Activated CD4-positive, alpha-beta T cell treated with anti-CD3 and anti-CD28 coated beads for 36 hours (primary cell): ENCODE measurements at regions of chr13 and their contacts with region 1.

Region 1: DNA sequence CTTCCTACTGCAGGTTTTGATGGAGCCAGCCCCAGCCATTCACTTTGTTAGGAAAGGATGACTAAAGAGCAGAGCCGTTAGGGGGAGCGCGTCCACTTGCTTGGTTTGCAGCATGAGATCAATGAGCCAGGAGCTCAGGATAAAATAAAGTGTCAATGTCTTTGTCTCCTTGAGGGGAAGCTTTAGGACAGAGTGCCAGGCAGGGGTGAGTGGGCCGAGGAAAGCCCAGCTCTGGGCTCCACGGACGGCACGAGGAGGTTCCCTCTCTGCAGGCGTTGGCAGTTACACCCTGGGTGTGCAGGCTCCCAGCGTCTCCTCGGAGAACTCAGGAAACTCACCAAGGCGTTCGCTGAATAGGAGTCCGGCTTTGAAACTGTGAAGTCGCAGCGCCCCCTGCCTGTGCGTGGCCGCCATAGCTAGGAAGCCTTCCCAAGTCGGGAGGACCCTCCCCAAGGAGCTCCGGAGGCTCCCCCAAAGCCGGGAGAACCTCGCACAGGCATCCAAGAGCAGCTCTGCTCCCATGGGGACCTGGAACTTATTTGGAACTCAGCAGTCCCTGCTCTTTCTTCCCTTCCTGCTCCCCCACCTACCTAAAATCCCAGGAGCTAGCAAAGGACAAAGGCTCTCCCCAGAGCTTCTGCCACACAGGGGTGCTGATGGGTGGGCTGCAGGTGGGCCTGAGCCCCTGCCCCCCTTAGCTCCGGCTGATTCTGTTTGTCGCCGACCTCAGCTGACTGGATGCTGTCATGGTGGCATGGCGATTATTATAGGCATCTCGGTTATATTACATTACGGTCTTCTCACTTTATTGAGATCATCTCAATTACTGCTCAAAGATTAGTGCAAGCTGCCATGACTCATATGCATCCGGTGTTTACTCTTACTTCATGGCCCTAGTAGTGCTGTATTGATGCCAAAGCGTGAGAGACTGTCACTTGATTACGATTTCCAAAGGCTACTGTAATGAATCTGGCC is 34.4 kb downstream of the GSX1 start:
- DNase-seq: peak; percentile 82
- ATAC-seq: peak; percentile 84
- H3K4me3 Mint-ChIP-seq: no peak overlapping the region
- H3K27ac Mint-ChIP-seq: no peak overlapping the region
- H3K4me1 Mint-ChIP-seq: peaks cover 7% of the 10 kb centered on the region
- H3K27me3 Mint-ChIP-seq: peaks cover 51% of the 10 kb centered on the region

Region 2: GRCh38 chr13:26985285-26985878 is 841.3 kb before region 1 on chr13:
- CTCF ChIA-PET with region 1: interaction called, 6 read pairs
- POLR2A ChIA-PET with region 1: no interaction called
- intact Hi-C with region 1: loop called in 1 of 2 experiments (anchors 5 kb)
- DNase-seq: peak; percentile 84
- ATAC-seq: peak; percentile 92
- H3K4me3 Mint-ChIP-seq: no peak overlapping the region
- H3K27ac Mint-ChIP-seq: no peak overlapping the region
- H3K4me1 Mint-ChIP-seq: no peaks in the 10 kb centered on the region
- H3K27me3 Mint-ChIP-seq: peaks cover 12% of the 10 kb centered on the region

Region 3: DNA sequence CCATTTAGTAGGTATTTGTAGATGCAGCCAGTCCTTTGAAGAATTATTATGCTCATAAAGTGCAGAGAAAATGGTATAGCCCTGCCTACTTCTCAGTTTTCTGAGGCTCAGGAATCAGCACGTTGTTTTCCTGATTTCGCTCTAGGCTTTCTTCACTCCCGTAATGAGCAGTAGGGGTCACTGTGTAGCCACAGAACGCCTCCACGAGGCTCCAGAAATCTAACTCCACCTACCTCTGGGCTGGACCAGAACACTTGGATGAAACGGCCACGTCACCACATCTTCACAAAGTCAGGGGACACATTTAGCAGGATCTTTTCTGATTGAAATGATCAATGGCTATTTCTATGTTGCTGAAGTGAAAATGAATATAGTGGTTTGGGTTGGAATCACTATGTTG is 452.0 kb before region 1 on chr13:
- CTCF ChIA-PET with region 1: interaction called, 74 read pairs
- POLR2A ChIA-PET with region 1: no interaction called
- intact Hi-C with region 1: loop called (anchors 1 kb)
- DNase-seq: peak; percentile 72
- ATAC-seq: peak; percentile 95
- H3K4me3 Mint-ChIP-seq: no peak overlapping the region
- H3K27ac Mint-ChIP-seq: no peak overlapping the region
- H3K4me1 Mint-ChIP-seq: peaks cover 3% of the 10 kb centered on the region
- H3K27me3 Mint-ChIP-seq: peaks cover 15% of the 10 kb centered on the region

Region 4: DNA sequence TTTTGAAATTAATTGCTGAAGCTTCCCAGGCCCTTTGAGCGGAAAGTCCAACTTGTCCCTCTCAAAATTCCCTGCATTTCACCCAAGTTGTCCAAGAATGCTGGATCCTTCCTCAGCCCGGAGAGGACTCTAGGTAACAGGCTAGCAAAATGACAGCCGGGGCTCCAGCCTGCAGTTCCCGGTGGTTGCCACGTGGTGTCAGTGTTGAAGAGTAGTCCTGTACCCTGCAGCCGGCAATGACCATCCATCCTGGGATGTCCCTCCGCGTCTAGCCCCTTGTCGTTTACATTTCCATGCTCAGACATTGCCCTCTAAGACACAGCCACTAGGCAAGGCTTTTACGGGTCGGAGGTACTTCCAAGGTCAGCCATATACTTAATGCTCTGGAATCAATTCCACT is 344.9 kb before region 1 on chr13:
- CTCF ChIA-PET with region 1: interaction called, 3 read pairs
- POLR2A ChIA-PET with region 1: no interaction called
- intact Hi-C with region 1: loop called (anchors 2 to 5 kb)
- DNase-seq: peak; percentile 68
- ATAC-seq: peak; percentile 47
- H3K4me3 Mint-ChIP-seq: no peak overlapping the region
- H3K27ac Mint-ChIP-seq: no peak overlapping the region
- H3K4me1 Mint-ChIP-seq: peaks cover 17% of the 10 kb centered on the region
- H3K27me3 Mint-ChIP-seq: no peaks in the 10 kb centered on the region

Region 5: GRCh38 chr13:27770809-27771208 is 55.9 kb before region 1 on chr13:
- CTCF ChIA-PET with region 1: interaction called, 50 read pairs
- POLR2A ChIA-PET with region 1: interaction called, 3 read pairs
- intact Hi-C with region 1: loop called (anchors 1 kb)
- DNase-seq: peak; percentile 59
- ATAC-seq: no peak
- H3K4me3 Mint-ChIP-seq: no peak overlapping the region
- H3K27ac Mint-ChIP-seq: no peak overlapping the region
- H3K4me1 Mint-ChIP-seq: no peaks in the 10 kb centered on the region
- H3K27me3 Mint-ChIP-seq: peaks cover 11% of the 10 kb centered on the region

Region 6: GRCh38 chr13:27839809-27840467 is 13.3 kb after region 1 on chr13:
- CTCF ChIA-PET with region 1: interaction called, 42 read pairs
- POLR2A ChIA-PET with region 1: no interaction called
- intact Hi-C with region 1: no loop called
- DNase-seq: no peak
- ATAC-seq: no peak
- H3K4me3 Mint-ChIP-seq: no peak overlapping the region
- H3K27ac Mint-ChIP-seq: no peak overlapping the region
- H3K4me1 Mint-ChIP-seq: no peaks in the 10 kb centered on the region
- H3K27me3 Mint-ChIP-seq: peaks cover 28% of the 10 kb centered on the region

Region 7: DNA sequence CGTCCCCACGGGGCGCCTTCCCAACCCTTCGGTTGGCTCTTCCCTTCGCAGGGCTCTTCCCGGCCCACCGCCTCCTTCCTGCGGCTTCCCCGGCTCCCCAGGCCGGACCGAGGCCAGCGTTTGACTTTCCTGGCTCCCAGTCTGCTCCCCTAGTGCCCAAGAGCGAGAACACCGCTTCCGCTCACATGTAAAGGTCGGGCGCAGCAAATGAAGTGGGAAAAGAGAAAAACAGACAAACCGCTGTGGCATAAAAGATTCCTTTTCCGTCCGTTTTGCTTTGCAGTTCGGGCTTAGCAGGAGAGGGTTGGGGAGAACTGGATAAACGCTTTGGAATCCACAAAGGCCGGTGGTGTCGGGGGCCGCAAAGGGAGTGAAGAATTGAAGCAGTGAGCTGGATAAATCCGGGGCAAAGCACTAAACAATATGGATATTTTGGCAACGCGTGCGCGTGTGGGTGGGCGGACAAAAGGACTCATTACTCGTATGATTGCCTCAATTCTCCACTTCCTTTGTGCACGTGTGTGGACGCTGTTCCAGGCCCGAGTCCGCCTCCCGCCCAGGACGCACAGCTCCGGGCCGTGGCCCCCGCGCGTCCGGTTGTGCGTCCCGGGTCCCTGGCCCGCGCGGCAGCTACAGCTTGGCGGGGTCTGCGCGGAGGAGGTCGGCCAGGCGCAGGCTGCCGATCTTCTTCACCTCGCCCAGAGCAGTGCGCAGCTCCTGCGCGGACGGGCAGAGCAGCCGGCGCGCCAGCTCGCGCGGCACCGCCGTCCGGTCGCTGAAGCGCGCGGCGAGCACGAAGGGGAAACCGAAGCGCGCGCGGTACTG is 151.0 kb after region 1 on chr13:
- CTCF ChIA-PET with region 1: interaction called, 126 read pairs
- POLR2A ChIA-PET with region 1: interaction called, 4 read pairs
- intact Hi-C with region 1: no loop called
- DNase-seq: no peak
- ATAC-seq: no peak
- H3K4me3 Mint-ChIP-seq: no peak overlapping the region
- H3K27ac Mint-ChIP-seq: no peak overlapping the region
- H3K4me1 Mint-ChIP-seq: peaks cover 15% of the 10 kb centered on the region
- H3K27me3 Mint-ChIP-seq: peaks cover 79% of the 10 kb centered on the region